Activated CD8-positive, alpha-beta T cell treated with anti-CD3 and anti-CD28 coated beads, Interleukin-2, amount 10 ng/mL, durations not matched to agents 7 days and 5 days (primary cell): ENCODE measurements at regions of chr7 and their contacts with region 1.

Region 1: GRCh38 chr7:139645572-139646523 is 122.4 kb downstream of the CLEC2L start:
- DNase-seq: peak; percentile 88
- ATAC-seq: peak; percentile 67
- H3K4me3 Mint-ChIP-seq: no peak overlapping the region
- H3K27ac Mint-ChIP-seq: no peak overlapping the region
- H3K4me1 Mint-ChIP-seq: peaks cover 53% of the 10 kb centered on the region
- H3K27me3 Mint-ChIP-seq: no peaks in the 10 kb centered on the region

Region 2: DNA sequence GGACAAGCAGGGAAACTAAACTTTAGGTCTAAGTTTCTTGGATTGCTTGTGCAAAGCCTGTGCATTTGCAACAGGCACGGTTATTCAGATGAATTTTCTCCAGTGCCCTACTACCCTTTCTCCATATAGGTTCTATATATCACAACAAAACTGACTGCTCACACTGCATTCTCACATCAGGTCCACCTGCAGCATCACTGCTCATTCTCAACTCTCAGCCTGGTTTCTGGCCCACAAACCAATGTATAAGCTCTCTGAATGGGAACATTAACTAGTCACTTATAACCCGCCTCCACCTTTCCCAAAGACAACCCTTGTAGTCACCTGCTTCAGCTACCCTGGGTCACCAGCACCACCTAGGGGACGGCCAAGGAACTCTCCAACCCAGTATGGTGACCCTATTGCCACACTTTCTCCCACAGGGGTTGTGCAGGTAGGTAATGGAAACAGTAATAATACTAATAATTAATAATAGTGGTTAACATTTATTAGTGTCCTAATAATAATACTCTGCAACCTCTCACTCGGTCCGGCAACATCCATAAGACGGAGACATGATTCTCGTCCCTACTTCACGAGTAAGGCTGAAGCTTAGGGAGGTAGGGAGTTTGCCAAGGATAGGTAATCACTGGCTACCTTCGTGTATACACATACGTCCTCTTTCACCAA is 25.0 kb before region 1 on chr7:
- CTCF ChIA-PET with region 1: interaction called, 59 read pairs
- POLR2A ChIA-PET with region 1: no interaction called
- DNase-seq: peak; percentile 72
- ATAC-seq: peak; percentile 78
- H3K4me3 Mint-ChIP-seq: no peak overlapping the region
- H3K27ac Mint-ChIP-seq: no peak overlapping the region
- H3K4me1 Mint-ChIP-seq: peaks cover 31% of the 10 kb centered on the region
- H3K27me3 Mint-ChIP-seq: no peaks in the 10 kb centered on the region

Region 3: DNA sequence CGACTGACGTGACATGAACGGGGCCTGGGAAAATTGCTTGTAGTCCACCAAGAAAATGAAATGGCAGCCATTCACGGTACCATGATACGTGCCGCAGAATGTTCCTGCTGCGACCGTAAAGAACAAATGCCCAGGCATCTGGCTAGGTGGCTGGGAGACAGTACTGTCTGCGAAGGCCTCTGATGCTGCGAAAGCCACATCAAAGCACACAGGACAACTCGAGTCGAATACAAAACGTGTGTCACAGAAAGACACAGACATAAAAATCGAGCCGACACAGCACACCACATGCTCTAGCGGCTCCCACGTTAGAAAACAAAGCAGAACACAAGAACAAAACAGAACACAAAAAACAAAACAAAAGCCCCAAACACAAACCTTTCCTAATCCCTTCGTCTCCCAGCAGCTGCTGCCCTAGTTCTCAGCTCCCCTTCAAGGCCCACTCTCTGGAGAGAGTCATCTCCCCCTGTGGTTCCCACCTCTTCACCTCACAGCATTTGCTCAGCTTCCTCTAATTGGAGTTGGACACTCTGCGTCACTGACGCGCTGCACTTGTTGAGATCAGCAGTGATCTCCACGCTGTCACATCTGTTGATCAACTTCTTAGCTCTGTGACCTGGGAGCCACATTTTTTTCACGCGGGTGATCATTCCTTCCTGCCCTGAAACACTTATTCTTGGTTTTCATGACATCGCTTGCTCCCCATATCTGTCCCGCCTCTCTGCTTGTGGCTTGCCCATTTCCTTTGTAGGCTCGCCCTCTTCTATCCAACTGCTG is 10.1 kb before region 1 on chr7:
- CTCF ChIA-PET with region 1: interaction called, 34 read pairs
- POLR2A ChIA-PET with region 1: interaction called, 3 read pairs
- DNase-seq: peak; percentile 67
- ATAC-seq: peak; percentile 83
- H3K4me3 Mint-ChIP-seq: peak overlapping the region; percentile 45
- H3K27ac Mint-ChIP-seq: peak overlapping the region; percentile 87
- H3K4me1 Mint-ChIP-seq: peaks cover 32% of the 10 kb centered on the region
- H3K27me3 Mint-ChIP-seq: no peaks in the 10 kb centered on the region

Region 4: GRCh38 chr7:139691253-139691781 is 45.5 kb after region 1 on chr7:
- CTCF ChIA-PET with region 1: interaction called, 12 read pairs
- POLR2A ChIA-PET with region 1: no interaction called
- DNase-seq: no peak
- ATAC-seq: no peak
- H3K4me3 Mint-ChIP-seq: no peak overlapping the region
- H3K27ac Mint-ChIP-seq: no peak overlapping the region
- H3K4me1 Mint-ChIP-seq: peaks cover 10% of the 10 kb centered on the region
- H3K27me3 Mint-ChIP-seq: no peaks in the 10 kb centered on the region

Region 5: GRCh38 chr7:139777948-139778841 is 132.3 kb after region 1 on chr7 and contains the start of gene HIPK2:
- CTCF ChIA-PET with region 1: interaction called, 24 read pairs
- POLR2A ChIA-PET with region 1: interaction called, 3 read pairs
- DNase-seq: peak; percentile 74
- ATAC-seq: peak; percentile 71
- H3K4me3 Mint-ChIP-seq: peak within 1 kb of the TSS; percentile 94
- H3K27ac Mint-ChIP-seq: peak within 1 kb of the TSS; percentile 94
- H3K4me1 Mint-ChIP-seq: peaks cover 35% of the 10 kb centered on the region
- H3K27me3 Mint-ChIP-seq: peaks cover 16% of the 10 kb centered on the region
- total RNA-seq, gene HIPK2: 17.0 to 17.2 TPM

Region 6: DNA sequence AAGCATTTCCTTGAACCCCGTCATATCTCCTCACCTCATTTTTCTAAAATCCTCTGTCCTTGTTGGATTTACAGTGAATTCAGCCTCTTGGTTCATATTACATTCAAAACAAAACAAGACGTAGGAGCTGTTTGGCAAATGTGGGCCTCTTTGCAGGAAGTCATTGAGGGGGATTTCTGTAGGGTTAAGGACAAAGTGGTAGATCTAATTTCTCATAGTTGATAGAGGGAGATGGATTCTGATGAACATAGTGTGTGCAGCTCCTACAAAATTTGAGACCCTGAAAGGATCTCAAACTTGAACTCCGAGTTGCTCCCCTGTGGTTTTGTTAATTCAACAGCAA is 183.9 kb after region 1 on chr7:
- CTCF ChIA-PET with region 1: interaction called, 10 read pairs
- POLR2A ChIA-PET with region 1: no interaction called
- DNase-seq: no peak
- ATAC-seq: no peak
- H3K4me3 Mint-ChIP-seq: peak overlapping the region; percentile 50
- H3K27ac Mint-ChIP-seq: peak overlapping the region; percentile 41
- H3K4me1 Mint-ChIP-seq: peaks cover 19% of the 10 kb centered on the region
- H3K27me3 Mint-ChIP-seq: peaks cover 12% of the 10 kb centered on the region

Region 7: DNA sequence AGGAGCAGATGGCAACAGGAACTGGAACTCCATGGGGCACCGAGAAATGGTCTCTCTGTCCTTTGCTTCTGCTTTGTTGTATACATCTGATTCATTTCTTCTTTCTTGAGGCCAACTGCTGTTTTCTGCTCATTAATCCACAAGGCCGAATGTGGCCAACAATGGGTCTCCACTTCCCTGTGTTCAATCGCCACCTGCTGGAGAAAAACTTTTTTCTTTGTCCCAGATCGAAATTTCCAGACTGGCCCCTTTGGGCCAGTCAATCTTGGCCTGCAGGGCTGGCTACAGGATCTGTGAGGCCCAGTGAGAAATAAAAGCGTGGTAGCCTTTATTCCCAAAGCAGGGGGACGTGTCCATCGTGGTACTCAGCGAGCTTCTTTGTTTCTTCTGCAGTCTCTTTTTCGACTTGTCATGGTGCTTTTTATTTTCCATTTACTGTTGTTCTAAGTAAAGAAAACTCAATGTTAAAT is 358.1 kb after region 1 on chr7:
- CTCF ChIA-PET with region 1: interaction called, 103 read pairs
- POLR2A ChIA-PET with region 1: no interaction called
- DNase-seq: peak; percentile 49
- ATAC-seq: no peak
- H3K4me3 Mint-ChIP-seq: no peak overlapping the region
- H3K27ac Mint-ChIP-seq: no peak overlapping the region
- H3K4me1 Mint-ChIP-seq: no peaks in the 10 kb centered on the region
- H3K27me3 Mint-ChIP-seq: peaks cover 2% of the 10 kb centered on the region